ENCODE measurements at regions of chr16 and their contacts with region 1.

Region 1: DNA sequence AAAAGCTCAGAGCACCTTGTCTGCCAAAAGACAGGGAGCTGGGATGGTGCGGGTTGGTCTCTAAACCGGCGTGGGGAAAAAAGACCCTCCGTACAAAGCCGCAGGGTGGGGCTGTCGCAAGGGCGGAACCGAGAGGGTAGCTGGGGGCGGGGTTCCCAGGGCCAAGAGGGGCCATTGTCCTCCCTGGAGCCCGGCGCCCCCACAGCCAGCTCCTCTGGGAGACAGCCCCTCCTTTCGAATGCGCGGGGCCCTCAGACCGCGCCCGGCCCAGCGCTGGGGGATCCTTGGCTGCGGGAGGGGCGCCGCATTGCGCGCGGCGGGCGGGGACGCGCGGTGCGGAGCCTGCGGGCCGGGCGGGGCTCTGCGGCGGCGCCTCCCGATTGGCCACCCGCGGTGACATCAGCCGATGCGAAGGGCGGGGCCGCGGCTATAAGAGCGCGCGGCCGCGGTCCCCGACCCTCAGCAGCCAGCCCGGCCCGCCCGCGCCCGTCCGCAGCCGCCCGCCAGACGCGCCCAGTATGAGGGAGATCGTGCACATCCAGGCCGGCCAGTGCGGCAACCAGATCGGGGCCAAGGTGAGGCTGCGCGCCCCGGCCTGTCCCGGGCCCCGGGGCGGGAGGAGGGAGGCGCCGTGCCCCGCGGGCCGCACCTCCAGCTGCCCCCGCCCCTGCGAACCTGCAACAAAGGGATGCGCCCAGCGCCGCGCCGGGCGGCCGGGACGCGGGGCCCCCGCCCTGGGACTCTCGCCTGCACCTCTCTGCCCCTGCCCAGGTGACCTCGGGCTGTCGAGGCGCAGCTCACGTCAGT is at the start of gene TUBB3:
- DNase-seq: peak; percentile 55
- H3K4me3 Mint-ChIP-seq: peak within 1 kb of the TSS; percentile 59
- H3K27ac Mint-ChIP-seq: no peak within 1 kb of the TSS
- H3K4me1 Mint-ChIP-seq: peaks cover 46% of the 10 kb centered on the region
- H3K27me3 Mint-ChIP-seq: peaks cover 48% of the 10 kb centered on the region
- total RNA-seq, gene TUBB3: 0.99 to 1.4 TPM

Region 2: GRCh38 chr16:89641458-89642119 is 281.5 kb before region 1 on chr16:
- CTCF ChIA-PET with region 1: no interaction called
- POLR2A ChIA-PET with region 1: no interaction called
- intact Hi-C with region 1: no loop called
- DNase-seq: no peak
- H3K4me3 Mint-ChIP-seq: no peak overlapping the region
- H3K27ac Mint-ChIP-seq: no peak overlapping the region
- H3K4me1 Mint-ChIP-seq: peaks cover 9% of the 10 kb centered on the region
- H3K27me3 Mint-ChIP-seq: no peaks in the 10 kb centered on the region

Region 3: DNA sequence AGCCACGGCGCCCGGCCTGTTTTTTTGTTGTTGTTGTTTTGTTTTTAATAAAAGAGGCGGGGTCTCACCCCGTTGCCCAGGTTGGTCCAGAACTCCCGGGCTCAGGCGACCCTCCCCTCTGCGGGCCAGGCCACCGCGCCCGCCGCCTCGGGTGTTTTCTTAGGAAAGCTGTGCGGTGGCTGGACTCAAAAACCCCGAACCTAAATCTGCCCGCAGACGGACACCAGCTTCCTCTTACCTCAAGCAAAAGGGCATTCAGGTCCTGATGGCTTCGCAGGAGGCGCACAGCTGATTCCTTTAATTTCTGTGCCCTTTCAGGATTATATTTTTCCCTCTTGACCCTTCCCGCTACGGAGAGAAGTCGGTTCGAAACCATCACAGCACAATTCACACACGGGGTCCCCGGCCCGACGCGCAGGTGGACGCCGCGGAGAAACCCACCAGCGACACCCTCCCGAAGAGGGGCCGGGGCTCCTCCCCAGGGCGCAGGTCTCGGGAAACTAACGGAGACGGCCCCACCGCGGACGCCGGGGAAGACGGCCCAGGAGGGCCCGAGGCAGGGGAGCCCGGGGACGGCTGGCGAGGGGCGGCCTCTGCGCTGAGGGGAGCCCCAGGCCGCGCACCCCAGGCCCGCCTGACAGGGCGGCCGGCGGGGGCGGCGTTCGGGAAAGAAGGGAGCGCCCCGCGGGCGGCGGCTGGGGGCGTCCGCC is 107.3 kb before region 1 on chr16:
- CTCF ChIA-PET with region 1: no interaction called
- POLR2A ChIA-PET with region 1: no interaction called
- intact Hi-C with region 1: loop called (anchors 10 kb)
- DNase-seq: peak; percentile 25
- H3K4me3 Mint-ChIP-seq: peak overlapping the region; percentile 85
- H3K27ac Mint-ChIP-seq: peak overlapping the region; percentile 18
- H3K4me1 Mint-ChIP-seq: peaks cover 37% of the 10 kb centered on the region
- H3K27me3 Mint-ChIP-seq: no peaks in the 10 kb centered on the region

Region 4: GRCh38 chr16:89873972-89874689 is 49.0 kb before region 1 on chr16:
- CTCF ChIA-PET with region 1: no interaction called
- POLR2A ChIA-PET with region 1: no interaction called
- intact Hi-C with region 1: loop called (anchors 5 kb)
- DNase-seq: peak; percentile 97
- H3K4me3 Mint-ChIP-seq: peak overlapping the region; percentile 85
- H3K27ac Mint-ChIP-seq: peak overlapping the region; percentile 98
- H3K4me1 Mint-ChIP-seq: peaks cover 14% of the 10 kb centered on the region
- H3K27me3 Mint-ChIP-seq: no peaks in the 10 kb centered on the region

Region 5: GRCh38 chr16:89909777-89910716 is 13.0 kb before region 1 on chr16:
- CTCF ChIA-PET with region 1: interaction called, 22 read pairs
- POLR2A ChIA-PET with region 1: interaction called, 3 read pairs
- intact Hi-C with region 1: no loop called
- DNase-seq: peak; percentile 76
- H3K4me3 Mint-ChIP-seq: no peak overlapping the region
- H3K27ac Mint-ChIP-seq: no peak overlapping the region
- H3K4me1 Mint-ChIP-seq: no peaks in the 10 kb centered on the region
- H3K27me3 Mint-ChIP-seq: no peaks in the 10 kb centered on the region